K562 (cell line): ENCODE measurements at regions of chr19 and their contacts with region 1.

Region 1: GRCh38 chr19:37928527-37929286 is 21.7 kb downstream of the SIPA1L3 start:
- DNase-seq: no peak
- ATAC-seq: no peak
- H3K4me3 ChIP-seq: no peak overlapping the region
- H3K27ac ChIP-seq: no peak overlapping the region
- H3K4me1 ChIP-seq: peaks cover 0 to 6% of the 10 kb centered on the region in 2 experiments; a peak in 2 of 5 replicates
- H3K27me3 ChIP-seq: peaks cover 0 to 7% of the 10 kb centered on the region in 2 experiments; a peak in 1 of 5 replicates
- CTCF ChIP-seq: no peak
- EP300 ChIP-seq: no peak
- POLR2A ChIP-seq: no peak
- RAD21 ChIP-seq: no peak

Region 2: GRCh38 chr19:38224014-38224862 is 295.5 kb after region 1 on chr19 and contains the start of gene DPF1:
- CTCF ChIA-PET with region 1: no interaction called
- POLR2A ChIA-PET with region 1: no interaction called
- in situ Hi-C with region 1: loop called (anchors 10 kb)
- intact Hi-C with region 1: no loop called
- DNase-seq: peak; percentile 92 to 96 (median 96)
- ATAC-seq: peak; percentile 97
- H3K4me3 ChIP-seq: peak within 1 kb of the TSS; percentile 67
- H3K27ac ChIP-seq: peak within 1 kb of the TSS; percentile 65
- H3K4me1 ChIP-seq: peaks cover 7 to 48% of the 10 kb centered on the region in 2 experiments; a peak in 4 of 5 replicates
- H3K27me3 ChIP-seq: no peaks in the 10 kb centered on the region; a peak in 1 of 5 replicates
- CTCF ChIP-seq: peak; percentile 64 to 81 (median 67)
- EP300 ChIP-seq: no peak
- POLR2A ChIP-seq: peak; percentile 57
- RAD21 ChIP-seq: peak; percentile 34 to 56; a peak in 3 of 4 replicates
- polyA plus RNA-seq, gene DPF1: 0.10 to 0.29 TPM